Heart left ventricle (tissue), 16 donors: ENCODE measurements at regions of chr18 and their contacts with region 1.

Region 1: GRCh38 chr18:27483276-27483675 is 298.2 kb upstream of the CHST9 start:
- DNase-seq: no peak
- ATAC-seq: no peak
- H3K4me3 ChIP-seq: no peak overlapping the region
- H3K27ac ChIP-seq: no peak overlapping the region
- H3K4me1 ChIP-seq: no peaks in the 10 kb centered on the region
- H3K27me3 ChIP-seq: no peaks in the 10 kb centered on the region
- CTCF ChIP-seq: no peak
- POLR2A ChIP-seq: no peak

Region 2: GRCh38 chr18:27415495-27415894 is 67.8 kb before region 1 on chr18:
- intact Hi-C with region 1: loop called in 2 of 10 experiments (anchors 5 to 10 kb)
- DNase-seq: no peak
- ATAC-seq: no peak
- H3K4me3 ChIP-seq: no peak overlapping the region
- H3K27ac ChIP-seq: no peak overlapping the region
- H3K4me1 ChIP-seq: peaks cover 0 to 3% (median 0%) of the 10 kb centered on the region in 12 donors
- H3K27me3 ChIP-seq: no peaks in the 10 kb centered on the region
- CTCF ChIP-seq: no peak
- POLR2A ChIP-seq: no peak